AG04450 (cell line): ENCODE measurements at regions of chr6 and their contacts with region 1.

Region 1: GRCh38 chr6:151240036-151240685 is 394 bp downstream of the AKAP12 start:
- DNase-seq: no peak
- H3K4me3 ChIP-seq: peak overlapping the region; percentile 76
- H3K27ac ChIP-seq: peak overlapping the region; percentile 55
- H3K27me3 ChIP-seq: no peaks in the 10 kb centered on the region
- CTCF ChIP-seq: no peak

Region 2: DNA sequence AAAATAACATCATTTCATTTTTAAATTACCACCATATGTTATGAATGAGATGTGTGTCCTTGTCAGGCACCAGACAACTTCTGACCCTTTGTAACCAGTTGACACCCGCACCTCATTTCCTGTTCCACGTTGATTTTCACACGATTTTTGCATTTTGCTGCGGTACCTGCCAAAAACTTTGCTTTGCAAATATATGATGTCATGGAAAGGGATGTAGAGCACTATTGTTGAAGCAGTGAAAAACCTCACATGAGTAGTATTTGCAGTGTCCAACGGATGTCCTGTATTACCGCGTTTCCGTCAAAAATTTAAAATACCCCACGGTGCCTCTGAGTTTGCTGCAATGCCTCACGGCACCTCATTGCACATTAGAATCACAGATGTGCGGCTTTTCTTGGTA is 259.1 kb before region 1 on chr6:
- CTCF ChIA-PET with region 1: no interaction called
- POLR2A ChIA-PET with region 1: interaction called, 13 read pairs
- DNase-seq: no peak
- H3K4me3 ChIP-seq: no peak overlapping the region
- H3K27ac ChIP-seq: no peak overlapping the region
- H3K27me3 ChIP-seq: no peaks in the 10 kb centered on the region
- CTCF ChIP-seq: no peak

Region 3: DNA sequence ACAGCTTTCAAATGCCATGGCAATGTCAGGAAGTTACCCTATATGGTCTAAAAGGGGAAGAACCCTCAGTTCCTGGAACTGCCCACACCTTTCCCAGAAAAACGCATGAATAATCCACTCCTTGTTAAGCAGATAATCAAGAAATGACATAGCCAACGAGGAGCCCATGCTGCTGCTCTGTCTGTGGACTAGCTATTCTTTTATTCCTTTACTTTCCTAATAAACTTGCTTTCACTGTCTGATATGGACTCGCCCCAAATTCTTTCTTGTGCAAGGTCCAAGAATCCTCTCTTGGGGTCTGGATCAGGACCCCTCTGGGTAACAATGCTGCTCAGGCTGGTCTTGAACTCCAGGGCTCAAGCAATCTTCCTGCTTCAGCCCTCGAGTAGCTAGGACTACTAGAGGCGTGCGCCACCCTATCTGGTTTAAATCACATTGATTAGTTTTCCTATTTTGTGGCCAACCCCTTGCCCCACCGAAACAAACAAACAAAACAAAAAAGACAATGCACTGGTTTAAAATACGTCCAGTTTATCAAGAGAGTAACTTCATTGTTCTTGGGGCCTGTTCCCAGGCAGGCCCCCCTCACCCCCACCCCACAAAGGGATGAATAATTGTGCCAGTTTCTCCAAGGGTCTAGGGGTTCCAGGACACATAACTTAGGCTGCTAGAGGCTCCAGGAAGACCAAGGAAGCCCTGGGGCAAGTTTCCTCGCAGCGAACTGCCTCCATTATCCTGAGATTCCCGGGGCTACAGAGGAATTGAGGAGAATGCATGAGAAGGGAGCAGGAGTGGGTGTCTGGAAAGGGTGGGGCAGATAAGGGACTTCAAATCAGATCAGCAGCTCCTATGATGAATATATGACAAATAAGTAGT is 10.5 kb before region 1 on chr6:
- CTCF ChIA-PET with region 1: interaction called, 5 read pairs
- POLR2A ChIA-PET with region 1: interaction called, 10 read pairs
- DNase-seq: no peak
- H3K4me3 ChIP-seq: no peak overlapping the region
- H3K27ac ChIP-seq: no peak overlapping the region
- H3K27me3 ChIP-seq: peaks cover 4% of the 10 kb centered on the region
- CTCF ChIP-seq: no peak

Region 4: GRCh38 chr6:151723152-151723551 is 483.0 kb after region 1 on chr6:
- CTCF ChIA-PET with region 1: interaction called, 12 read pairs
- POLR2A ChIA-PET with region 1: no interaction called
- DNase-seq: no peak
- H3K4me3 ChIP-seq: no peak overlapping the region
- H3K27ac ChIP-seq: no peak overlapping the region
- H3K27me3 ChIP-seq: no peaks in the 10 kb centered on the region
- CTCF ChIP-seq: no peak